K562 (cell line): ENCODE measurements at regions of chr9 and their contacts with region 1.

Region 1: GRCh38 chr9:125241000-125241862 is at the start of gene HSPA5:
- DNase-seq: peak; percentile 96 to 100 (median 98)
- ATAC-seq: peak; percentile 88
- H3K4me3 ChIP-seq: peak within 1 kb of the TSS; percentile 92
- H3K27ac ChIP-seq: peak within 1 kb of the TSS; percentile 99
- H3K4me1 ChIP-seq: peaks cover 21 to 31% of the 10 kb centered on the region in 2 experiments; a peak in 4 of 5 replicates
- H3K27me3 ChIP-seq: no peaks in the 10 kb centered on the region; a peak in 1 of 5 replicates
- CTCF ChIP-seq: peak; percentile 15 to 32 (median 16); a peak in 3 of 6 replicates
- EP300 ChIP-seq: no peak
- POLR2A ChIP-seq: no peak
- RAD21 ChIP-seq: peak in 1 of 2 experiments; percentile 15; a peak in 2 of 4 replicates
- polyA plus RNA-seq, gene HSPA5: 48.0 to 113 TPM

Region 2: DNA sequence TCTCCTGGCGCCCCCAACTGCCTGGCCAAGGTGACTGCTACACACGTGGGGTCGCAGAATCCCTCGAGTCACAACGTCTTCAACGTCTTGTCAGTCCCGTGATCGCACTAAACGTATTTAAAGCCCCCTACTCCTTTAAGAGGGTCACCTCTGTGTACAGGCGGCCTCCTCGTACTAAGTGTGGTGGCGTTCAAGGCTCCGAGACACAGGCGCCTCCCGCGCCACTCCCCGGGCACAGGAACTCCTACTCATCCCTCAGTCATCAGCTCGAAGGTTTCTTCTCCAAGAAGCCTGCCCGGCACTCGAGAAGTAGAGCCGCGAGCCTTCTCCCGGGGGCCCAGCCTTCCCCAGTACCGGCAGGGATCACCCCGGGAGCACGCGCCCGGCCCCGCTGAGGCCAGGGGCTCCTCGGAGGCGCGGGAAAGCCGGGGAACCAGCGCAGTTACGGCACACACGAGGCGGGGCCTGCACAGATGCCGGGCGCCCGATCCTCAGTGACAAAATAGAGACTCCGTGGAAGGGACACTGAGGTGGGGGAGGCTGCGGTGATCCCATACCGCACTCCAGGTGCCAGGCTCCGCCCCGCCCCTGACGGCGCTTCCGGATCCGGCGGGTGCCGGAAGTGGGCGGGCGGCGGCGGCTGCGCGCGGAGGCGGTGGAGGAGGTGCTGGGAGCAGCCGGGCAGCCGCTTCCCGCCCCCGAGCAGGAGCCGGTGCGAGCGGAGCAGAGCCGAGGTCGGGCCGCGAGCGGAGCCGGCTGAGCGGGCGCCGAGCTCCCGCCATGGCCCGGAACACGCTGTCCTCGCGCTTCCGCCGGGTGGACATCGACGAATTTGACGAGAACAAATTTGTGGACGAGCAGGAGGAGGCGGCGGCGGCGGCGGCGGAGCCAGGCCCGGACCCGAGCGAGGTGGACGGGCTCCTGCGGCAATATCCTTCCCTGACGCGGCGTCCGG is 372.4 kb before region 1 on chr9:
- CTCF ChIA-PET with region 1: no interaction called
- POLR2A ChIA-PET with region 1: interaction called, 4 read pairs
- in situ Hi-C with region 1: no loop called
- intact Hi-C with region 1: loop called (anchors 5 kb)
- DNase-seq: peak; percentile 91 to 97 (median 94)
- ATAC-seq: peak; percentile 87
- H3K4me3 ChIP-seq: peak overlapping the region; percentile 91
- H3K27ac ChIP-seq: peak overlapping the region; percentile 97
- H3K4me1 ChIP-seq: peaks cover 35 to 50% of the 10 kb centered on the region in 2 experiments
- H3K27me3 ChIP-seq: no peaks in the 10 kb centered on the region
- CTCF ChIP-seq: peak; percentile 37 to 60 (median 48); a peak in 5 of 6 replicates
- EP300 ChIP-seq: no peak
- POLR2A ChIP-seq: peak; percentile 96
- RAD21 ChIP-seq: peak in 1 of 2 experiments; percentile 24; a peak in 2 of 4 replicates

Region 3: GRCh38 chr9:124964604-124965003 is 276.6 kb before region 1 on chr9:
- CTCF ChIA-PET with region 1: no interaction called
- POLR2A ChIA-PET with region 1: no interaction called
- in situ Hi-C with region 1: no loop called
- intact Hi-C with region 1: no loop called
- DNase-seq: peak in 2 of 4 experiments; percentile 64 to 80
- ATAC-seq: peak; percentile 74
- H3K4me3 ChIP-seq: no peak overlapping the region
- H3K27ac ChIP-seq: peak overlapping the region; percentile 55
- H3K4me1 ChIP-seq: peaks cover 10 to 31% of the 10 kb centered on the region in 2 experiments
- H3K27me3 ChIP-seq: no peaks in the 10 kb centered on the region
- CTCF ChIP-seq: no peak
- EP300 ChIP-seq: peak; percentile 94
- POLR2A ChIP-seq: no peak
- RAD21 ChIP-seq: peak in 1 of 2 experiments; percentile 16; a peak in 1 of 4 replicates

Region 4: DNA sequence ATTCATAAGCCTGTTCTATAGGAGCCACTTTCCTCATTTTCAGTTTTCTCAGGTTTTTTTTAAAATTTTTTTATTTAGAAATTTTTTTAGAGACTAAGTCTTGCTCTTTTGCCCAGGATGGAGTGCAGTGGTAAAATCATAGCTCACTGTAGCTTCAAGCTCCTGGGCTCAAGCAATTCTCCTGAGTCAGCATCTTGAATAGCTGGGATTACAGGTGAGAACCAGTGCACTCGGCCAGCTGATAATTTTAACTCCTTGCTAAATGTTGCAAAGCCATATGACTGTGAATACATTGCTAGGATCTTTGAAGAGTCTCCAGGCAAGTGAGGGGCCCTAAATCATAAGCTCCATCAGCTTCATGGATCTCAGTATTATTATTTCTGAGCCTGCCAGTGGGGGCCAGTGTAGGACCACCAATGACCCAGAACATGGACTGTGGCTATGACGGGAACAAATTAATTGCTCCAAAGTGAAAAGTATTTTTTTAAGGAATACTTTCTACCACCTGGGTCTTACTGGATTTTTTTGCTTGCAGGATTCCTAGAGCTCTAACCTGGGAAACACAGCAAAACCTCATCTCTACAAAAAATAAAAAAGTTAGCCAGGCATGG is 14.7 kb after region 1 on chr9:
- CTCF ChIA-PET with region 1: no interaction called
- POLR2A ChIA-PET with region 1: interaction called, 40 read pairs
- in situ Hi-C with region 1: no loop called
- intact Hi-C with region 1: no loop called
- DNase-seq: peak; percentile 43 to 61 (median 50)
- ATAC-seq: peak; percentile 89
- H3K4me3 ChIP-seq: no peak overlapping the region
- H3K27ac ChIP-seq: no peak overlapping the region
- H3K4me1 ChIP-seq: peaks cover 8 to 10% of the 10 kb centered on the region in 2 experiments; a peak in 4 of 5 replicates
- H3K27me3 ChIP-seq: no peaks in the 10 kb centered on the region
- CTCF ChIP-seq: peak; percentile 49 to 76 (median 74)
- EP300 ChIP-seq: no peak
- POLR2A ChIP-seq: no peak
- RAD21 ChIP-seq: peak; percentile 61 to 77

Region 5: DNA sequence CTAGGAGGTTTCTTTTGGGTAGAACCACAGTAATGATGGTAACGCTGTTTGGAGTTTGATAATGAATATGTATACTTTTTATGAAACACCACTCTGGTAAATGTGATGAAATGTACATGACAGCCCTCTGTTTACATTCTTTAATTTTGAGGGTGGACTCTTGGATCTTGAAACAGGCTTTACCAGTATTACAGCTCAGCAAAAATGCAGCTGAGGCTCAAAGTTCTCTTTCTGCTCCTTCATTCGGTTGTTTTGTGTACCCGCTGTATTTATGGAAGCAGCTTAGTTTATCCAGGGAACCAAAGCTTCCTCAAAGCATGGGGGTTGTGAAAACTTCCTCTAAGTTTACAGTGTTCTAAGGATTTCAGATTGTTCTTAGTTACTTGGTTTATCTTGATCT is 31.5 kb after region 1 on chr9:
- CTCF ChIA-PET with region 1: no interaction called
- POLR2A ChIA-PET with region 1: interaction called, 11 read pairs
- in situ Hi-C with region 1: no loop called
- intact Hi-C with region 1: no loop called
- DNase-seq: no peak
- ATAC-seq: no peak
- H3K4me3 ChIP-seq: no peak overlapping the region
- H3K27ac ChIP-seq: peak overlapping the region; percentile 44; the same call in 2 of the 3 replicates
- H3K4me1 ChIP-seq: peaks cover 10 to 15% of the 10 kb centered on the region in 2 experiments; a peak in 4 of 5 replicates
- H3K27me3 ChIP-seq: no peaks in the 10 kb centered on the region
- CTCF ChIP-seq: no peak
- EP300 ChIP-seq: no peak
- POLR2A ChIP-seq: no peak
- RAD21 ChIP-seq: no peak

Region 6: GRCh38 chr9:125361837-125362531 is 120.8 kb after region 1 on chr9:
- CTCF ChIA-PET with region 1: no interaction called
- POLR2A ChIA-PET with region 1: interaction called, 20 read pairs
- in situ Hi-C with region 1: no loop called
- intact Hi-C with region 1: no loop called
- DNase-seq: peak in 2 of 4 experiments; percentile 21 to 59
- ATAC-seq: peak; percentile 94
- H3K4me3 ChIP-seq: no peak overlapping the region
- H3K27ac ChIP-seq: peak overlapping the region; percentile 17; the same call in 1 of the 3 replicates
- H3K4me1 ChIP-seq: no peaks in the 10 kb centered on the region
- H3K27me3 ChIP-seq: no peaks in the 10 kb centered on the region
- CTCF ChIP-seq: peak; percentile 43 to 59 (median 56)
- EP300 ChIP-seq: no peak
- POLR2A ChIP-seq: no peak
- RAD21 ChIP-seq: peak in 1 of 2 experiments; percentile 51; a peak in 3 of 4 replicates